Gastrocnemius medialis (tissue), 4 donors: ENCODE measurements at regions of chr1 and their contacts with region 1.

Region 1: GRCh38 chr1:43789604-43790550 is 82.5 kb downstream of the ST3GAL3 start:
- DNase-seq: no peak
- ATAC-seq: no peak
- H3K4me3 ChIP-seq: no peak overlapping the region
- H3K27ac ChIP-seq: no peak overlapping the region
- H3K4me1 ChIP-seq: peaks cover 16 to 21% of the 10 kb centered on the region in 2 donors
- H3K27me3 ChIP-seq: no peaks in the 10 kb centered on the region
- CTCF ChIP-seq: no peak
- POLR2A ChIP-seq: no peak

Region 2: DNA sequence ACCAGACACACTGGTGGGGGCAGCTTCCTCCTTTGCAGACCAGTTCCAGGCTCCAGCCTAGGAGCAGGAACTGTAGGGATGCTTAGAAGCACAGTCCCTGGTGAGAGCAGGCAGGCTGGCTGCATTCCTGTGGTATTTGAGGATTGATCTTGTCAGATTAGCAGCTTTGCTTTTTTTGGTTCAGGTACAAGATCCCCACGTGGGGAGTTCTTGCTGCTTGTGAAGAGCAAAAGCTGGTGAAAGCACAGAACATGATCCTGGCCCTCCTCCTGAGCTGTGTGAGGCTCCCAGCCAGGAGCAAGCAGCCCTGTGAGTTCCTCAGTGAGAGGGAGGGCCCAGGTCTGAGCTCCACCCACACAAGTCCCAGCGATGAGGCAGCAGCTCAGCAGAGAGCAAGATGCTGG is 68.5 kb after region 1 on chr1:
- in situ Hi-C with region 1: no loop called
- intact Hi-C with region 1: loop called (anchors 2 kb)
- DNase-seq: peak; percentile 69 to 72
- ATAC-seq: peak; percentile 63 to 84
- H3K4me3 ChIP-seq: no peak overlapping the region
- H3K27ac ChIP-seq: peak overlapping the region; percentile 51 to 71 (median 56)
- H3K4me1 ChIP-seq: peaks cover 15 to 32% of the 10 kb centered on the region in 2 donors
- H3K27me3 ChIP-seq: no peaks in the 10 kb centered on the region
- CTCF ChIP-seq: no peak
- POLR2A ChIP-seq: no peak